Activated CD4-positive, alpha-beta memory T cell treated with anti-CD3 and anti-CD28 coated beads, Interleukin-2, amount 10 ng/mL, durations not matched to agents 7 days and 5 days (primary cell): ENCODE measurements at regions of chr2 and their contacts with region 1.

Region 1: DNA sequence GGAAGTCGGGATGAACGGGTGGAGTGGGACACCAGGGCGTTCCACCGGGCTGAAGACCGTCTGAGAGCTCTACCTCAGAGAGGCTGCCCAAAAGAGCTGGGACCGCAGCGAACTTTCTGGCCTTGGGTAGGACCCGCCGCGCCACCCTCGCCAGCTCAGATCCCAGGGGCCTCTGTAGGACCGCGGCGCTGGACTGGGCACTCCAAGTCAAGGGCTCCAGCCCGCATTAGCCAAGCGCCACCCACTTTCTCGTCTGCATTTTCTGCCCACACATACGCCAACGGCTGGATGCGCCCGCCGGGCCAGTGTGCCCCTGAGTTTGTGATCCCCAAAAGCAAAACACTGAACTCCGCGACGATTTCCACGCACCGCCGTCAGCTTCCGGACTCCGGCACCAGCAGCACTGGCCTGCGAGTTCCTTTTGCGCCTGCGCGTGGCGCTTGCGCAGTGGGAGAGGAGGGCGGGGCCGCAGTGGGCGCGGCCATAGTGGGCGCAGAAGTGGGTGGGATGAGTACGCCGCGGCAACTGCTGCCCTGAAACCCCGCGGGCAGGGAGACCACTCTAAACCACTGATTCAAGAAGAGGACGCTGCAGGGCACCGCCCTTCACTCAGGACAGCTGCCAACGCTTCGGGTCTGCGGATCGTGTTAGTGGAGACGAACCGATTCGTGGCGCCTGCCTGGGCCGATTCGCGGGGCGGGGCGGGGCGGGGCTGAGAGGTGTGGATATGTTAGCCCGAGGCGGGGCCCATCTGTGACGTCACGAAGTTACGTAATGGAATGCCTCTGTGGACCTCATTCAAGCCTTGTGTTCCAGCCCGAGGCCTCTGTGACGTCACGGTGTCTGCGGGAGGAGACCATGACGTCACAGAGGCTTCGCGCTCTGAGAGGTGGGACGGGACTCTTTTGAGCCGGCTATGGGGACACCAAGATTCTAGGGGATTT is 10.5 kb downstream of the OSR1 start:
- DNase-seq: peak; percentile 97
- H3K4me3 Mint-ChIP-seq: peak overlapping the region; percentile 94
- H3K27ac Mint-ChIP-seq: peak overlapping the region; percentile 88
- H3K4me1 Mint-ChIP-seq: peaks cover 22% of the 10 kb centered on the region
- H3K27me3 Mint-ChIP-seq: peaks cover 35% of the 10 kb centered on the region

Region 2: GRCh38 chr2:18560031-18560796 is 787.7 kb before region 1 on chr2 and contains the start of gene RDH14:
- CTCF ChIA-PET with region 1: no interaction called
- POLR2A ChIA-PET with region 1: interaction called, 19 read pairs
- DNase-seq: peak; percentile 93
- H3K4me3 Mint-ChIP-seq: peak within 1 kb of the TSS; percentile 92
- H3K27ac Mint-ChIP-seq: peak within 1 kb of the TSS; percentile 95
- H3K4me1 Mint-ChIP-seq: peaks cover 33% of the 10 kb centered on the region
- H3K27me3 Mint-ChIP-seq: no peaks in the 10 kb centered on the region
- total RNA-seq, gene RDH14: 13.2 to 14.0 TPM

Region 3: GRCh38 chr2:19000776-19001175 is 347.1 kb before region 1 on chr2:
- CTCF ChIA-PET with region 1: no interaction called
- POLR2A ChIA-PET with region 1: no interaction called
- DNase-seq: no peak
- H3K4me3 Mint-ChIP-seq: no peak overlapping the region
- H3K27ac Mint-ChIP-seq: no peak overlapping the region
- H3K4me1 Mint-ChIP-seq: no peaks in the 10 kb centered on the region
- H3K27me3 Mint-ChIP-seq: no peaks in the 10 kb centered on the region

Region 4: GRCh38 chr2:19336781-19337180 is 11.1 kb before region 1 on chr2:
- CTCF ChIA-PET with region 1: no interaction called
- POLR2A ChIA-PET with region 1: interaction called, 23 read pairs
- DNase-seq: no peak
- H3K4me3 Mint-ChIP-seq: no peak overlapping the region
- H3K27ac Mint-ChIP-seq: no peak overlapping the region
- H3K4me1 Mint-ChIP-seq: no peaks in the 10 kb centered on the region
- H3K27me3 Mint-ChIP-seq: no peaks in the 10 kb centered on the region

Region 5: DNA sequence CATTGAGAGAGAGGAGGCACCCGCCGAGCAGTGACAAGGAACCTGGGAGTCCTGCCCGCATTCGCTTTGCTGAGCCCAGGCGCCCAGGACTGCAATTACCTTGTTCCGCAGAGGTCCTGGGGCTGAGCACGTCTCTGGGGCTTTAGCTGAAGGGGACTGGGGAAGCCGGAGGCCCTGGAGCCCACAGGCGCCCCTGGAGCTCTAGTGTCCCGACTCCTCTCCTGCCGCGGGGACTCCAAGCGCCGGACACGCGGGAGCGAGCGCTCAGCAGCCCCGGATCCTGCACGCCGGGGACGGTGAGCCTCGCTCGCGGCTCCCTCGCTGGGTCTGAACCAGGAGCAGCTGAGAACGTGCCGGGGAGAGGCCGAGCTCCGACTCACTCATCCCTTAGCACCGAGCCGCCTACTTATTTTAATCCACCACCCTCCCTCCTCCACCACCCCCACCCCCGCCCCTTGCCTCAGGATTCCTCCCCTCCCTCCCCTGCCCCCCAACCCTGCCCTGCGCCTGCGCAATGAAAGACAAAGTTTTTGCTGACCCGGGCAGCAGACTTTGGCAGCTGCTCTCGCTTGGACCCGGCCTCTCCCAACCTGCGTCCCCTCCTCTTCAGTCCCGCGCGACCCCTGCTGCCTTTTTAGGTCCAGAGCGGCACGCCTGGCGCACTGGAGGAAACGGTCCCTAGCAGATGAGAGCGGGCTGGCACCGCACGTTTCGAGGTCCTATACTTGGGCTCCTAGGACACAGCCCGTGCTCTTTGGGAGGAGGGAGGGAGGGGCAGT is 10.5 kb after region 1 on chr2 and contains the start of gene OSR1:
- CTCF ChIA-PET with region 1: interaction called, 24 read pairs
- POLR2A ChIA-PET with region 1: interaction called, 30 read pairs
- DNase-seq: no peak
- H3K4me3 Mint-ChIP-seq: peak within 1 kb of the TSS; percentile 13
- H3K27ac Mint-ChIP-seq: peak within 1 kb of the TSS; percentile 29
- H3K4me1 Mint-ChIP-seq: peaks cover 36% of the 10 kb centered on the region
- H3K27me3 Mint-ChIP-seq: peaks cover 94% of the 10 kb centered on the region
- total RNA-seq, gene OSR1: not detected

Region 6: DNA sequence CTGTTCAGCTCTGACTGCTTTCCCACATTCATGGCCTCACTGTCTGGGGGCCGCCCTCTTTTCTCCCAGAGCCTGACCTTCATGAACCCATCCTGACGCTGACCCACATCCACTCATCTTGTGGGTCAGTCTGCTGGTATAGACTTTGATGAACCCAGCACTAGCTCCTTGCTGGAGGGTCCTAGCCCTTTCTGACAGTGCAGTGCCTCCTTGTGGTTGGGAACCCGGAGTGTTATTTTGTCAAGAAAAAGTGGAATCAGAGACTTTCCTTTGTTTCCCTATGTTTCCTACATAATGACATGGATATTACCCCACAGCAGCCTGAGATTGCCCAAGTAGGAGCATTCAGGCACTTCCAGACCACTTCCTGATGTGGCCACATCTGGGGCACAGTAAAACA is 29.8 kb after region 1 on chr2:
- CTCF ChIA-PET with region 1: no interaction called
- POLR2A ChIA-PET with region 1: no interaction called
- DNase-seq: no peak
- H3K4me3 Mint-ChIP-seq: no peak overlapping the region
- H3K27ac Mint-ChIP-seq: no peak overlapping the region
- H3K4me1 Mint-ChIP-seq: no peaks in the 10 kb centered on the region
- H3K27me3 Mint-ChIP-seq: peaks cover 24% of the 10 kb centered on the region